Dorsolateral prefrontal cortex (tissue), 120 donors: ENCODE measurements at regions of chr16 and their contacts with region 1.

Region 1: GRCh38 chr16:25111403-25112166 is at the start of gene LCMT1:
- DNase-seq: peak; percentile 73 to 94 (median 91)
- H3K4me3 ChIP-seq: peak within 1 kb of the TSS; percentile 68 to 100 (median 96)
- H3K27ac ChIP-seq: peak within 1 kb of the TSS in 56 of 59 donors; percentile 2 to 91 (median 78)
- H3K27me3 ChIP-seq: no peaks in the 10 kb centered on the region
- CTCF ChIP-seq: peak in 29 of 56 donors; percentile 4 to 46 (median 26)
- total RNA-seq, gene LCMT1: 37.1 to 97.2 (median 71.6) TPM

Region 2: GRCh38 chr16:24789881-24790280 is 321.7 kb before region 1 on chr16:
- intact Hi-C with region 1: no loop called
- DNase-seq: no peak
- H3K4me3 ChIP-seq: no peak overlapping the region
- H3K27ac ChIP-seq: no peak overlapping the region
- H3K27me3 ChIP-seq: no peaks in the 10 kb centered on the region
- CTCF ChIP-seq: no peak

Region 3: GRCh38 chr16:24834459-24835335 is 276.9 kb before region 1 on chr16:
- intact Hi-C with region 1: loop called in 1 of 2 experiments (anchors 5 kb)
- DNase-seq: peak in 5 of 10 donors; percentile 43 to 74 (median 58)
- H3K4me3 ChIP-seq: no peak overlapping the region
- H3K27ac ChIP-seq: peak overlapping the region in 38 of 59 donors; percentile 4 to 96 (median 49)
- H3K27me3 ChIP-seq: no peaks in the 10 kb centered on the region
- CTCF ChIP-seq: peak; percentile 15 to 86 (median 66)

Region 4: GRCh38 chr16:25014500-25015147 is 97.0 kb before region 1 on chr16:
- intact Hi-C with region 1: loop called in 1 of 2 experiments (anchors 10 kb)
- DNase-seq: peak; percentile 46 to 82 (median 74)
- H3K4me3 ChIP-seq: peak overlapping the region; percentile 49 to 94 (median 81)
- H3K27ac ChIP-seq: peak overlapping the region; percentile 67 to 98 (median 94)
- H3K27me3 ChIP-seq: no peaks in the 10 kb centered on the region
- CTCF ChIP-seq: peak in 22 of 56 donors; percentile 6 to 32 (median 17)

Region 5: DNA sequence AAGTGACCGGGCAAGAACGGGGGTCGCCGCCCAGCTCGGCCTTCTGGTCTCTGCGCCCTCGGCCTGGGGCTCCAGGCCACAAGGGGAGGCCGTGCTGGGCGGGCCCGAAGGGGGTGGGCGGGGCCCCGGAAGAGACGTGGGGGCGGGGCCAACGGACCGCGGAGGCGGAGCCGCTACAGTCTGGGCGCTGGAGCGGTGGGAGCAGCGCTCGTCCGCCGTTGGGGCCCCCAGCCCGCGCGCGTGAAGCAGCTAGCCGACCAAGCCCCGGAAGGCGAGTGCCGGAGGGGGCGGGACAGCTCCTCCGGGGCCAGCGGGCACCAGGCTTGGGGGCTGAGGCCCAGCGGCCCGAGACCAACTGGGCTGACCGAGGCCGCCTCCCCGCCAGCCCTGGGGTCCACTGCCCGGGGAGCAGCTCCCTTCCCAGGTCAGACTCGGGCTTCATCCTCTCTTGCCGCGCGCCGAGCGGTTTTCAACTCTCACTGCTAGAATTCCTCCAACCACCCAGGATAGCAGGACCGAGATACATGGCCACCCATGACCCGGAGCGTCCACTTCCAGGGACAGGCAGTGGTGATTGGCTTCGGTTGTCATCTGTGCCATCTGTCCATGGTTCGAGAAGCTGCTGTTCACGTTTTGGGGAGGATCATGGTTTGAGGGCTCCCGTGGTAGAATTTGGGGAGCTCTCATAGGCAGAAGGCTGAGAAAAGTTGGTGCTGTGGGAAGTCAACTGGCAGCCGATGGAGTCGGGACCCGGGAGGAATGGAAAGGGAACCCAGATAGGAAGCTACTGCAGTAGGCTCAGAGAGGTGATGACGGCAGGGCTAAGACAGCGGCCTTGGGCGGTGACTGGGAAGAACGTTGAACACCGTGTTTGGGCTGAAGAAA is 44.6 kb before region 1 on chr16:
- intact Hi-C with region 1: loop called (anchors 2 to 5 kb)
- DNase-seq: peak; percentile 65 to 82 (median 70)
- H3K4me3 ChIP-seq: peak overlapping the region; percentile 60 to 97 (median 84)
- H3K27ac ChIP-seq: peak overlapping the region in 58 of 59 donors; percentile 14 to 92 (median 80)
- H3K27me3 ChIP-seq: no peaks in the 10 kb centered on the region
- CTCF ChIP-seq: peak in 24 of 56 donors; percentile 12 to 49 (median 22)

Region 6: GRCh38 chr16:25257504-25257955 is 145.9 kb after region 1 on chr16 and contains the start of gene ZKSCAN2:
- intact Hi-C with region 1: loop called in 1 of 2 experiments (anchors 10 kb)
- DNase-seq: peak; percentile 69 to 91 (median 85)
- H3K4me3 ChIP-seq: peak within 1 kb of the TSS; percentile 65 to 97 (median 88)
- H3K27ac ChIP-seq: peak within 1 kb of the TSS; percentile 68 to 99 (median 96)
- H3K27me3 ChIP-seq: no peaks in the 10 kb centered on the region
- CTCF ChIP-seq: peak in 17 of 56 donors; percentile 2 to 41 (median 16)
- total RNA-seq, gene ZKSCAN2: 6.3 to 13.4 (median 9.7) TPM